Right ventricle myocardium inferior (tissue), 1 donor: ENCODE measurements at regions of chr10 and their contacts with region 1.

Region 1: DNA sequence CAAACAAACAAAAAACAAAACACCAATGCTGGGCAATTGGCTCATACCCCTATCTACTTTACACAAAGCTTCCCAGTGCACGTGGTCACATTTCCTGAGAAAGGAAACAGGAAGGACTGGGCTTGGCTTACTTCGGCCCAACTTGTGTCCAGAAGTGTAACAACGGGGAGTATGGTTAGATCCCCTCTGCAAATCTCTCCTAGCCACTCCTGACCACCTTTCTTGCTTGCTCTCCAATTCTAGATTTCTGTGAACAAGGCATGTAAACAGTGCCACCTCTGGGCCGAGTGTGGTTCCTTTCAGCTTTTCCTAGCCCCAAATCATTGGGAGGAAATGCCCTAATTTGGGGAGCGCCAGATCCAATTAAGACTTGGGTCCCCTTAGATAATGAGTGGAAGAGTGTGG is 21.0 kb upstream of the FRAT2 start:
- DNase-seq: no peak
- ATAC-seq: peak; percentile 51

Region 2: GRCh38 chr10:97128516-97129154 is 226.9 kb before region 1 on chr10:
- intact Hi-C with region 1: no loop called
- DNase-seq: no peak
- ATAC-seq: no peak

Region 3: GRCh38 chr10:97278491-97278989 is 77.0 kb before region 1 on chr10:
- intact Hi-C with region 1: loop called (anchors 5 kb)
- DNase-seq: no peak
- ATAC-seq: peak; percentile 88